HCT116 (cell line): ENCODE measurements at regions of chr2 and their contacts with region 1.

Region 1: GRCh38 chr2:8986327-8986976 is 17.0 kb downstream of the MBOAT2 start:
- DNase-seq: no peak
- ATAC-seq: peak; percentile 78
- H3K4me3 ChIP-seq: no peak overlapping the region
- H3K27ac ChIP-seq: no peak overlapping the region
- H3K4me1 ChIP-seq: no peaks in the 10 kb centered on the region
- H3K27me3 ChIP-seq: no peaks in the 10 kb centered on the region
- CTCF ChIP-seq: peak in 2 of 3 experiments; percentile 60 to 62; a peak in 4 of 6 replicates
- POLR2A ChIP-seq: no peak
- RAD21 ChIP-seq: peak; percentile 43

Region 2: DNA sequence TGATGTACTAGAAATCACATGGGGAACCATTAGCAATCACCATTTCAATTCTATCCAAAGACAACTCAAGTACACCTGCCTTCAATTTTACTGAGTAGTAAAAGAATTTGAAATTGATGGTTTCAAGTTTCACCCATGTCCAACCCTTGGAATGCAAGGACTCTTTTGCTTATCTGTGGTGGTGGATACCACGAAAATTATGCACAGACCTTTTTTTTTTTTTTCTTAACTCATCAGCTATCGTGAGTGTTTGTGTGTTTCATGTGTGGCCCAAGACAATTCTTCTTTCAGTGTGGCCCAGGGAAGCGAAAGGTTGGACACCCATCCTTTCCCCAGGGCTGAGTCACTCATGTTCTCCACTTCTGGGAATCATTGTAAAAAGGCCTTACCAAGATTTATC is 281.5 kb before region 1 on chr2:
- CTCF ChIA-PET with region 1: no interaction called
- POLR2A ChIA-PET with region 1: no interaction called
- RAD21 ChIA-PET with region 1: no interaction called
- intact Hi-C with region 1: no loop called
- DNase-seq: no peak
- ATAC-seq: no peak
- H3K4me3 ChIP-seq: no peak overlapping the region
- H3K27ac ChIP-seq: no peak overlapping the region
- H3K4me1 ChIP-seq: no peaks in the 10 kb centered on the region
- H3K27me3 ChIP-seq: no peaks in the 10 kb centered on the region
- CTCF ChIP-seq: no peak
- POLR2A ChIP-seq: no peak
- RAD21 ChIP-seq: no peak

Region 3: GRCh38 chr2:8872821-8873432 is 113.5 kb before region 1 on chr2:
- CTCF ChIA-PET with region 1: no interaction called
- POLR2A ChIA-PET with region 1: no interaction called
- RAD21 ChIA-PET with region 1: no interaction called
- intact Hi-C with region 1: loop called (anchors 5 kb)
- DNase-seq: peak; percentile 50
- ATAC-seq: peak; percentile 75
- H3K4me3 ChIP-seq: no peak overlapping the region
- H3K27ac ChIP-seq: no peak overlapping the region
- H3K4me1 ChIP-seq: no peaks in the 10 kb centered on the region
- H3K27me3 ChIP-seq: no peaks in the 10 kb centered on the region
- CTCF ChIP-seq: peak; percentile 62 to 90 (median 69)
- POLR2A ChIP-seq: no peak
- RAD21 ChIP-seq: peak; percentile 87

Region 4: GRCh38 chr2:9124231-9124741 is 137.8 kb after region 1 on chr2:
- CTCF ChIA-PET with region 1: no interaction called
- POLR2A ChIA-PET with region 1: no interaction called
- RAD21 ChIA-PET with region 1: no interaction called
- intact Hi-C with region 1: no loop called
- DNase-seq: no peak
- ATAC-seq: no peak
- H3K4me3 ChIP-seq: no peak overlapping the region
- H3K27ac ChIP-seq: no peak overlapping the region
- H3K4me1 ChIP-seq: no peaks in the 10 kb centered on the region
- H3K27me3 ChIP-seq: no peaks in the 10 kb centered on the region
- CTCF ChIP-seq: no peak
- POLR2A ChIP-seq: no peak
- RAD21 ChIP-seq: no peak